Cardiac septum (tissue), 1 donor: ENCODE measurements at regions of chr14 and their contacts with region 1.

Region 1: GRCh38 chr14:67875175-67876006 is 55.8 kb downstream of the RAD51B start:
- DNase-seq: no peak

Region 2: GRCh38 chr14:68535404-68536017 is 660.1 kb after region 1 on chr14:
- intact Hi-C with region 1: no loop called
- DNase-seq: no peak

Region 3: GRCh38 chr14:68824517-68825347 is 949.3 kb after region 1 on chr14:
- intact Hi-C with region 1: loop called (anchors 5 kb)
- DNase-seq: peak; percentile 90